Sciatic nerve (tissue), 2 donors: ENCODE measurements at regions of chr7 and their contacts with region 1.

Region 1: GRCh38 chr7:134514663-134515062 is 12.7 kb upstream of the AKR1B10 start:
- DNase-seq: no peak
- ATAC-seq: peak; percentile 66

Region 2: GRCh38 chr7:134444198-134444871 is 70.3 kb before region 1 on chr7:
- intact Hi-C with region 1: loop called (anchors 5 kb)
- DNase-seq: no peak
- ATAC-seq: peak; percentile 69

Region 3: GRCh38 chr7:134593530-134594392 is 79.1 kb after region 1 on chr7:
- intact Hi-C with region 1: no loop called
- DNase-seq: peak; percentile 90
- ATAC-seq: peak; percentile 97

Region 4: GRCh38 chr7:135035252-135035651 is 520.6 kb after region 1 on chr7:
- intact Hi-C with region 1: no loop called
- DNase-seq: no peak
- ATAC-seq: no peak